Right ventricle myocardium inferior (tissue), 1 donor: ENCODE measurements at regions of chr14 and their contacts with region 1.

Region 1: GRCh38 chr14:61326847-61327246 is 5.5 kb downstream of the PRKCH start:
- DNase-seq: no peak
- ATAC-seq: peak; percentile 53

Region 2: DNA sequence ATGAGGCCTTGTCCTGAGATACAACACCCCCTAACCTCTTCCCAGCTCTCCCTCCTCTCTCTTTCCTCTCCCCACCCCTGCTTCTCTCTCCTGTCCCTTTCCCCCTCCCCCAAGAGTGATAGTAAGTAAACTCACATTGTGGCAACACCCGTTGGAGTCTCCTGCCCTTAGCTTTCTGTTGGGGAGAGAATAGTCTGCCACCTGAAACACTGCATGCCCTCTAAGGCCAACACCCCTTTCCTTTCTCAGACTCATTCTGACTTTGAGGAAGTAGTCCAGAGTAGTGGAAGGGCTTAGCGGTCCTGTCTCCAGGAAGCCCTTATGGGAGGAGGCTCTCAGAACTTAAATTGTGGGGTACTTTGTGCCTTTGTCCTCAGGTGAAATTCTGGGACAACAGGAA is 89.7 kb after region 1 on chr14:
- intact Hi-C with region 1: loop called (anchors 5 kb)
- DNase-seq: no peak
- ATAC-seq: no peak